PC-3 (cell line): ENCODE measurements at regions of chr4 and their contacts with region 1.

Region 1: GRCh38 chr4:98430708-98431403 is 169.7 kb downstream of the RAP1GDS1 start:
- DNase-seq: peak; percentile 93
- ATAC-seq: peak; percentile 97
- H3K4me3 ChIP-seq: peak overlapping the region; percentile 46
- H3K27ac ChIP-seq: peak overlapping the region; percentile 82
- H3K4me1 ChIP-seq: peaks cover 40% of the 10 kb centered on the region
- H3K27me3 ChIP-seq: no peaks in the 10 kb centered on the region
- CTCF ChIP-seq: no peak

Region 2: DNA sequence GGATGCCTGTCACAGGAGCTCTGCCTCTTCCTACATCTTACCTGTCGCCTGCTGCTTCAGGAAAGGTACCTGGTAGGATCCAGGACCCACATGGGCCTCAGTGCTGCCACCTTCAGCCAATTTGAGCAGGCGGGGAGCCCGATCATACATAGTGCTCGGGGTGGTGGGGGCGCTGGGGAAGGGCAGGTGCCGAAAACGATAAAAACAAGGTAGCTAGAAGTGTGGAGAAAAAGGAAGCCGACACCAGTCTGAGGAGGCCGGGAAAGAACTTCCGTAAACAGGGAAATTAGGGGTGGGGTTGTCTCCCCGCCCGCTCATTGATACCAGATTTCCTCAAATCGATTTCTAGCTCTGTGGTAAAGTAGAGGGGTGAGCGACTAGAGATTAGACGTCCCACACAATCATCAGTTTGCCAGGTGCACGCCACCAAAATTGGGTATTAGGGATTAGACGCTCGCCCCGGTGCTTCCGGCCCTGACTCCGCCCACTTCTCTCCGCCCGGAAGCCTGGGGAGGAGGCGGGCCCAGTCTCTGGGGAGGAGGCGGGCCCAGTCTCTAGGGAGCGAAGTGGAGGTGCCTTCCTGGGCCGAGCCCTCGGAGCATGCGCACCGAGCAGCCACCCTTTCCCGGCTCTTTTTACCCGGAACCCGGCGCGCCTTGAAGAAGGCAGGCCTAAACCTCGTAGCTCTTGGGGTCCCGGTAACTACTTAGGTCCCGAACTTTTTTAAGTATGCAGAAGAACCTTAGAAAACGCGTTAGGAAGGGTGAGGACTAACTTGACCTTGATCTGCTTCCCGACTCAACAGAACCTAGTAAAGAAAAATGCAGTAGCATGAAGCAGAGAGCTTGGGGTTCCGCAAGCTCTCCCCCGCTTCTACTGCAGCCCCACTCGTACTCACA is 287.6 kb before region 1 on chr4 and contains the start of gene STPG2:
- CTCF ChIA-PET with region 1: no interaction called
- POLR2A ChIA-PET with region 1: interaction called, 5 read pairs
- intact Hi-C with region 1: loop called (anchors 10 kb)
- DNase-seq: peak; percentile 86
- ATAC-seq: peak; percentile 97
- H3K4me3 ChIP-seq: peak within 1 kb of the TSS; percentile 71
- H3K27ac ChIP-seq: peak within 1 kb of the TSS; percentile 81
- H3K4me1 ChIP-seq: peaks cover 17% of the 10 kb centered on the region
- H3K27me3 ChIP-seq: no peaks in the 10 kb centered on the region
- CTCF ChIP-seq: peak; percentile 69
- total RNA-seq, gene STPG2: 0.40 TPM in 1 of 2 replicates, not detected in the other

Region 3: DNA sequence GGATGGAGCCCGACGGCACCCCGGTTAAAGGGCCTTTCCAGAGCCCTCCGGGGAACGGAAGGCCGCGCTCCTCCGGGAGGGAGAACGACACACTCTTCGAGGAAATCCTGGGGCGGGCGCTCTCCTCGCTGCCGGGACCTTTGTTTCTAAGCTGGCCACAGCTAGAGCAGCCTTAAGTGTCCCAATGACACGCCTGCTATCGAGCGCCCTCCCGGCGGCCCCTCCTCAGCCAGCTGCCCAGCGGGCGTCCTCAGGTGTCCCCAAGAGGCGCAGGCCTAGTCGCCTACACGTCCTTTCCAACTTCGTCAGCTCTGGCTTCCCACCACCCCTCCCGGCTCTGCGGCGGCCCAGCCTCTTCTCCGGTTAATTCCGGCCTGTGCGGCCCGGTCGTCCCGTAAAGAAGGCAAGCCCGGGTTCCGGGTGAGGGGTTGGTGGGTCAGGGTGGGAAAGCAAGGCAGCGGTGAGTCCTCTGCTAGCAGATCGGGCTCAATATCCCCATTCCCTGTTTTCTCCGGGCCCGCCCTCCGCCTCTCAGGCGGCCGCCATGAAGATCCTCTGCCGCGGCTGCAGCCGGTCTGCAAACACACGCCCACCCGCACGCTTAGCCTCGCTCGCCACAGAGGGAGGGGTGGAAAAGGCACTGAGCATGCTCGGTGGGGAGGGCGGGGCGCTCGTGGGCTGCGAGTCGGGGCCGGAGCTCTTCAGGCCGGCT is 170.1 kb before region 1 on chr4:
- CTCF ChIA-PET with region 1: no interaction called
- POLR2A ChIA-PET with region 1: interaction called, 3 read pairs
- intact Hi-C with region 1: loop called (anchors 5 kb)
- DNase-seq: peak; percentile 90
- ATAC-seq: peak; percentile 87
- H3K4me3 ChIP-seq: peak overlapping the region; percentile 93
- H3K27ac ChIP-seq: peak overlapping the region; percentile 85
- H3K4me1 ChIP-seq: peaks cover 22% of the 10 kb centered on the region
- H3K27me3 ChIP-seq: no peaks in the 10 kb centered on the region
- CTCF ChIP-seq: no peak

Region 4: GRCh38 chr4:98377559-98377958 is 53.3 kb before region 1 on chr4:
- CTCF ChIA-PET with region 1: no interaction called
- POLR2A ChIA-PET with region 1: interaction called, 10 read pairs
- intact Hi-C with region 1: no loop called
- DNase-seq: no peak
- ATAC-seq: no peak
- H3K4me3 ChIP-seq: no peak overlapping the region
- H3K27ac ChIP-seq: no peak overlapping the region
- H3K4me1 ChIP-seq: no peaks in the 10 kb centered on the region
- H3K27me3 ChIP-seq: no peaks in the 10 kb centered on the region
- CTCF ChIP-seq: no peak

Region 5: DNA sequence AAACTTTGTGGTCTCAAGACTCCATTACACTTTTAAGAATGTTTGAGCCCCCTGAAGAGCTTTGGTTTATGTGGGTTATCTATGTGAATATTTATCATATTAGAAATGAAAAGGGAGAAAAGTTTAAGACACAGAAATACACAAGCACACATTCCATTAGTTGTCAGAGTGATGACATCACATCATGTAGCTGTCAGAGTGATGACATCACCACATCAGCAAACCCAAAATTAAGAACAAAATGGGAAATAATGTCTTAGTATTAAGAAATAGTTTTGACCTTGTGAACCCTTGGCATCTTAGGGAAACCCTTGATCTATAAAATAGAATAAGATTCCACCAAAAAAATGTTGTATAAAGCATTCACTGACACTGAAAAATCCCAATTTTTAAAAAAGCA is 31.6 kb after region 1 on chr4:
- CTCF ChIA-PET with region 1: no interaction called
- POLR2A ChIA-PET with region 1: no interaction called
- intact Hi-C with region 1: no loop called
- DNase-seq: no peak
- ATAC-seq: no peak
- H3K4me3 ChIP-seq: no peak overlapping the region
- H3K27ac ChIP-seq: no peak overlapping the region
- H3K4me1 ChIP-seq: peaks cover 9% of the 10 kb centered on the region
- H3K27me3 ChIP-seq: no peaks in the 10 kb centered on the region
- CTCF ChIP-seq: no peak